ENCODE measurements at regions of chr1 and their contacts with region 1.

Region 1: DNA sequence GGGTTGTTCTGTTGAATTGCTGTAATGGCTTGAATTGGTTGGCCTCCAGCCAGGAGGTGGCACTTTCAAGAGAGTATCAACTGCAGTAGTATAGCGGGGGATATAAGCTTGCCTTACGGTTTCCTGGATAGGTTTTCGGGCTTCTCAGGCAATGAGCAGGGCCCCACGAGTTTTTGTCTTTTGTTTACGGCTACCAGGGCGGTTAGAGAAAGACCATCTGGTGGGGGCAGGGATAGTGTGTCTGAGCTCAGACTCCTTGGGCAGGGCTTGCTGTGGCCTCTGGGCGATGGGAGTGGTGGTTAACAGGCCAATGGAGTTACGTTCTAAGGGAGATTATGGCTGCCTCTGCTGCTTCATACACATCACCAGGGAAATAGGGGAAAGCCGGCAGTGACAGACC is 62.8 kb downstream of the DTL start:
- DNase-seq: no peak
- H3K4me3 ChIP-seq: no peak overlapping the region
- CTCF ChIP-seq: no peak

Region 2: DNA sequence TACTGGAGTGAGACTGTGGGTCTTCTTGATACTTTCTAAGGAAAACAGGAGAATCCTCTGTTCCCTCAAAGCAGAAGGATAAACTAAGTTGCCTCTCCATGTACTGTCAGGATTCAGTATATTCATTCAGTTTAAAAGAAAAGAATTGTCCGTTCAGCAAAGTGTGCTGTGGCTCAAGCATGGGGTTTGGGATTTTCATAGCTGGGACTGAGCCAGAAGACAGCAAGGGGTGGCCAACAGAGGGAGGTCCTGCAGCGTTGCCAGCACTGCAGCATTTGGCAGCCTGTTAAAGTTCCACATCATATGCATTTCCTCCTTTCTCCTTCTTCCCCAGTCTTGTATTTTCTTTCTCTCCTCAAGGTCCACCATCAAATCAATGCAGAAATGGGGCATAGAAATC is 12.3 kb after region 1 on chr1:
- CTCF ChIA-PET with region 1: interaction called, 10 read pairs
- POLR2A ChIA-PET with region 1: interaction called, 3 read pairs
- DNase-seq: no peak
- H3K4me3 ChIP-seq: no peak overlapping the region
- CTCF ChIP-seq: peak; percentile 51